Dendritic cell treated with granulocyte-macrophage colony-stimulating factor and Interleukin-4, amounts not matched to agents 40 ng/mL and 50 ng/mL, for 4 days (primary cell): ENCODE measurements at regions of chr17 and their contacts with region 1.

Region 1: GRCh38 chr17:74379495-74380085 is 12.3 kb downstream of the GPR142 start:
- H3K4me3 Mint-ChIP-seq: no peak overlapping the region
- H3K27ac Mint-ChIP-seq: no peak overlapping the region
- H3K4me1 Mint-ChIP-seq: peaks cover 12% of the 10 kb centered on the region
- H3K27me3 Mint-ChIP-seq: peaks cover 33% of the 10 kb centered on the region

Region 2: DNA sequence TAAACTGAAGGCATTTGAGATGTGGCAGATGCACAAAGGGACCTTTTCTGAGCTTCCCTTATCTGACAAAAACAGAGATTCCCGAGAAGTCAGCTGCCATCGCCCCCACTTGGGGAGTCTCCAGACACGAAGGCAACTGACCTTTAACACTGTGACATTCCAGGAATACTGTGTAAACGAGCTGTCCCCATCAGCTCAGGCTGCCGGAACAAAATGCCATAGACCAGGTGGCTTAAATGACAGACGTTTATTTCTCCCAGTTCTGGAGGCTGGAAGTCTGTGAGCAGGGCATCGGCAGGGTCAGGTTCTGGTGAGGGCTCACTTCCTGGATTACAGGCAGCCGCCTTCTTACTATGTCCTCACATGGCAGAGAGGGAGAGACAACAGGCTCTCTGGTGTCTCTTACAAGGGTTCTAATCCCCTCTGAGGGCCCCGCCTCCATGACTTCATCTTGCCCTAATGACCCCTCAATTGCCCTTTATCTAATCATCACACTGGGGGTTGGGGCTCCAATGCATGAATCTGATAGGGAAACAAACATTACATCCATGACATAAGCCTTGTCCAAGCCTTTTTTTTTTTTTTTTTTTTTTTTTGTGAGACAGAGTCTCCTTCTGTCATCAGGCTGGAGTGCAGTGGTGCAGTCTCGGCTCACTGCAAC is 354.6 kb before region 1 on chr17:
- intact Hi-C with region 1: no loop called
- H3K4me3 Mint-ChIP-seq: no peak overlapping the region
- H3K27ac Mint-ChIP-seq: no peak overlapping the region
- H3K4me1 Mint-ChIP-seq: no peaks in the 10 kb centered on the region
- H3K27me3 Mint-ChIP-seq: peaks cover 6% of the 10 kb centered on the region

Region 3: GRCh38 chr17:74457146-74457819 is 77.7 kb after region 1 on chr17:
- intact Hi-C with region 1: loop called (anchors 1 kb)
- H3K4me3 Mint-ChIP-seq: no peak overlapping the region
- H3K27ac Mint-ChIP-seq: no peak overlapping the region
- H3K4me1 Mint-ChIP-seq: peaks cover 57% of the 10 kb centered on the region
- H3K27me3 Mint-ChIP-seq: peaks cover 20% of the 10 kb centered on the region